ENCODE measurements at regions of chr11 and their contacts with region 1.

Region 1: GRCh38 chr11:8263769-8264410 is at the start of gene LMO1:
- DNase-seq: peak; percentile 76 to 81
- H3K4me3 ChIP-seq: peak within 1 kb of the TSS; percentile 46 to 61
- H3K27ac ChIP-seq: no peak within 1 kb of the TSS
- H3K4me1 ChIP-seq: peaks cover 0 to 45% (median 35%) of the 10 kb centered on the region in 4 donors
- H3K27me3 ChIP-seq: peaks cover 0 to 64% of the 10 kb centered on the region in 2 donors
- CTCF ChIP-seq: peak; percentile 58 to 88

Region 2: DNA sequence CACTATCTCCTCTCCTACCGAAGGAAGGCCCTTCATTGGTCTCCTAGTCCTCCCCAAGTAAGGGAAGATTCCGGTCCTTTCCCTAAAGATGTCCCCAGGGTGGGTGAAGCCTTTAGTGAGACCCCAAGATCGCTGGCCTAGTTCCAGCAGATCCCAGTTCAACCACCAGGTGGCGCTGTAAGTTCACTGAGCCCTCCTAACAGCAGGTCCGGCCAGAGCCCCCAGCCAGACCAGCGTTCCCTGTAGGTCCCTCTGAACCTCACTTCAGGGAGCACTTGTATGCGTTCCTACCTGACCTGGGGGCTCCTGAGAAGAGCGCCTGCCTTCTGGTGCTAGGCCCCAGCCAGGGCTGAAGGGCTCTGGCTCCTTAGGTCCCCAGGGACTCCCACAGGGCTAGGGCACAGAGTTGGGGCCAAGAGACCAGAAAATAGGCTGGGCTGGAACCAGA is 38.3 kb before region 1 on chr11:
- intact Hi-C with region 1: loop called (anchors 2 kb)
- DNase-seq: peak; percentile 66 to 79
- H3K4me3 ChIP-seq: no peak overlapping the region
- H3K27ac ChIP-seq: no peak overlapping the region
- H3K4me1 ChIP-seq: peaks cover 0 to 8% (median 2%) of the 10 kb centered on the region in 4 donors
- H3K27me3 ChIP-seq: peaks cover 0 to 11% of the 10 kb centered on the region in 2 donors
- CTCF ChIP-seq: peak; percentile 91 to 93